ENCODE measurements at regions of chr3 and their contacts with region 1.

Region 1: DNA sequence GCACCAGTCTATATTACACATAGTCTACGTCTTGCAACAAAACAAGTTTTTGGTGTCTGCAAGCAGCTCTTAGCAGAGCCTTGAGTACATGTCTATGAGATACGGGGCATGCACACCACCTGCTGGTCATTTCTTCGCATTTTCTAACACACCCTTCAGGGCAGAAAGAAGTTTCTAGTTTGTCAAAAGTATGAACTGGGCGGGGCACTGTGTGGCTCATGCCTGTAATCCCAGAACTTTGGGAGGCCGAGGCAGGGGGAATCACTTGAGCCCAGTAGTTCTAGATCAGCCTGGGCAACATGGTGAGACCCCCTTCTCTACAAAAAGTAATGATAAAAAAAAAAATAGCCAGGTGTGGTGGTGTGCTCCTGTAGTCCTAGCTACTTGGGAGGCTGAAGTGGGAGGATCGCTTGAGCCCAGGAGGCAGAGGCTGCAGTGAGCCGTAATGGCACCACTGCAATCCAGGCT is 64.2 kb upstream of the ARL8B start:
- DNase-seq: peak; percentile 71 to 74
- H3K4me3 ChIP-seq: no peak overlapping the region
- H3K27ac ChIP-seq: no peak overlapping the region
- H3K4me1 ChIP-seq: peaks cover 6% of the 10 kb centered on the region
- H3K27me3 ChIP-seq: no peaks in the 10 kb centered on the region
- CTCF ChIP-seq: peak; percentile 73

Region 2: GRCh38 chr3:4350789-4351163 is 707.1 kb before region 1 on chr3:
- CTCF ChIA-PET with region 1: no interaction called
- POLR2A ChIA-PET with region 1: no interaction called
- intact Hi-C with region 1: loop called (anchors 5 kb)
- DNase-seq: peak; percentile 10 to 33
- H3K4me3 ChIP-seq: no peak overlapping the region
- H3K27ac ChIP-seq: no peak overlapping the region
- H3K4me1 ChIP-seq: no peaks in the 10 kb centered on the region
- H3K27me3 ChIP-seq: no peaks in the 10 kb centered on the region
- CTCF ChIP-seq: peak; percentile 80

Region 3: DNA sequence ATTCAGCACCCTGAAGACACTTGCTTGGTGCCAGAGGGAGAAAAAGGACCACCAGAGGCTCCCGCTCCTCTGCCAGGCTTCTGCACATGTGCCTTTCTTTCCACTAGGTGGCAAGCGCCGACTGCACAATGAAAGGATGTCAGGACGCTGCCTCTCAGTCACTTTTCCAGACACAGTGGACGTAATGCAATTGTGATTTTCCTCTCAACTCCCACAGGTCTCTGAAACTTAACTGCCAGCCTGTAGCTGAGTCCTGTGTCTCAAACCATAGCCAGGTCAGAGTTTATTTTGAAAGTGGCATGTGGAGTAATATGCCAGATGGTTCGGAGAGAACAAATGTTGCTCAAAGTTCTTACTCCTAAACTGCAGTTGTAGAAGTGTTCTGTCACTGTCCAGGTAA is 401.8 kb before region 1 on chr3:
- CTCF ChIA-PET with region 1: no interaction called
- POLR2A ChIA-PET with region 1: no interaction called
- intact Hi-C with region 1: loop called (anchors 1 kb)
- DNase-seq: peak; percentile 36 to 69
- H3K4me3 ChIP-seq: no peak overlapping the region
- H3K27ac ChIP-seq: no peak overlapping the region
- H3K4me1 ChIP-seq: no peaks in the 10 kb centered on the region
- H3K27me3 ChIP-seq: no peaks in the 10 kb centered on the region
- CTCF ChIP-seq: peak; percentile 79

Region 4: GRCh38 chr3:4712143-4712542 is 345.7 kb before region 1 on chr3:
- CTCF ChIA-PET with region 1: interaction called, 19 read pairs
- POLR2A ChIA-PET with region 1: interaction called, 6 read pairs
- intact Hi-C with region 1: loop called (anchors 1 kb)
- DNase-seq: peak; percentile 69 to 91
- H3K4me3 ChIP-seq: 0 out of 2 replicates have a peak overlapping the region, but pooled peaks have one; percentile 23
- H3K27ac ChIP-seq: peak overlapping the region; percentile 87
- H3K4me1 ChIP-seq: peaks cover 13% of the 10 kb centered on the region
- H3K27me3 ChIP-seq: no peaks in the 10 kb centered on the region
- CTCF ChIP-seq: no peak

Region 5: DNA sequence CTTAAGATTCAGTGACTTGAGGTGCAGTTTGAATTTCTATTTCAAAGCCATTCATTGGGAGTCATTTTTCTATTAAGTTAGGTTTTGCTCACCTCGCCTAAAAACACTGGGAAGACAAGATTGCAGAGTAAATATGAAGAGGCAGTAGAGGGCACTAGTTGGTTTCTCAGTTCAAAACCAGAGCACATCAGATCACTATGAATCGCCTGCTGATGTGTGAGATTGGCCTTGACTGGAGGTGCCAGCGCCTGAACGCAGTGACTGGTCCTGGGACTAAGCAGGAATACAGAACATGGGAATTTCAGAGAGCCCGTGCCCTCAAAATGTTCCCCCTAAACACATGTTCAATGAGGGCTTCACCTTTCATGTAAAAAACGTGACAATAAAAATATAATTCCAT is 335.8 kb before region 1 on chr3:
- CTCF ChIA-PET with region 1: interaction called, 23 read pairs
- POLR2A ChIA-PET with region 1: no interaction called
- intact Hi-C with region 1: no loop called
- DNase-seq: peak in 1 of 2 experiments; percentile 25
- H3K4me3 ChIP-seq: no peak overlapping the region
- H3K27ac ChIP-seq: no peak overlapping the region; the same call in 1 of the 2 replicates
- H3K4me1 ChIP-seq: no peaks in the 10 kb centered on the region
- H3K27me3 ChIP-seq: no peaks in the 10 kb centered on the region
- CTCF ChIP-seq: peak; percentile 39; the same call in 1 of the 2 replicates

Region 6: DNA sequence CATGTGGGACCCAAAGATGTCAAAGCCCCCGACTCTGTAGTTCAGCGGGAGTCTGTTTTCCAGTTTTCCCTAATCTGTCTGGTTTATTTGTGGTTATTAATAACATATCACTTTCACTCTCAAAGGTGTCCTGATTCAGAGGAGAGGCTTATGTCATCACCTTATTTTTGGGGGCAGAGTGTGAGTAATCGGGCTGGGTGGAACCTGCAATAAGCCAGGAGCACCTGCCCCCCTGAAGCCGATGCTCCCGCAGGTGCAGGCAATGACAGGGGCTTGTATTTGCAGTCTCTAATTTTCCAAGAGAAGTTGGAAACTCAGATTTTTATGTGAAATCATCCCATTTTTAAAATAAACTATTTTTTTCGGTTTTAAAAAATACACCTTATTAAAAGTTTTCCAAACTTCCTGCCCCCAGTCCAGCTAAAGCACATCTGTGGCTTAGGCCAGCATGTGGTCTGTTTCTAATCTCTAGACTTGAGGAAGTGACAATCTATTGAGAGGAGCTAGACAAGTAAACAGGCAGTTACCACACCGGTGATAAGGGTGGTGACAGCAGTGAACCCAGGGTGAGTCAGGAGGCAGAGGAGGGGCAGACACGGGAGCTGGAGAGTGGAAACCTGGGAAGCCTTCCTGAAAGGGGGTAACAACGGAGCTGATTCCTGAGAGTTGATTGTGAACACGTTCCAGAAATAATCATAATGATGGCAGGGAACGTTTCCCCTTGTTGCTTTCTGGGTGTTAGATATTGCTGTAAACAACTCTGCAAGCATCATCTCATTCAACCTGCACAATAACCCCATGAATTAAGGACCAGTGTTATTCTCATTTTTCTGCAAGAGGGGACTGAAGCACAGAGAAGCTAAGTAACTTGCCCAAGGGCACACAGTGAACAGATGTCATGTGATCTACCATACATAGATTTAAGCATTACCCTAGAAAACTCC is 41.4 kb before region 1 on chr3:
- CTCF ChIA-PET with region 1: interaction called, 4 read pairs
- POLR2A ChIA-PET with region 1: no interaction called
- intact Hi-C with region 1: loop called (anchors 1 kb)
- DNase-seq: peak; percentile 67 to 87
- H3K4me3 ChIP-seq: no peak overlapping the region
- H3K27ac ChIP-seq: peak overlapping the region; percentile 63
- H3K4me1 ChIP-seq: peaks cover 64% of the 10 kb centered on the region
- H3K27me3 ChIP-seq: no peaks in the 10 kb centered on the region
- CTCF ChIP-seq: no peak

Region 7: GRCh38 chr3:5026331-5027218 is 31.3 kb before region 1 on chr3:
- CTCF ChIA-PET with region 1: interaction called, 5 read pairs
- POLR2A ChIA-PET with region 1: no interaction called
- intact Hi-C with region 1: loop called (anchors 2 kb)
- DNase-seq: peak; percentile 64 to 87
- H3K4me3 ChIP-seq: peak overlapping the region; percentile 48; the same call in 1 of the 2 replicates
- H3K27ac ChIP-seq: peak overlapping the region; percentile 73
- H3K4me1 ChIP-seq: peaks cover 33% of the 10 kb centered on the region
- H3K27me3 ChIP-seq: no peaks in the 10 kb centered on the region
- CTCF ChIP-seq: peak; percentile 61